ENCODE measurements at regions of chr1 and their contacts with region 1.

Region 1: DNA sequence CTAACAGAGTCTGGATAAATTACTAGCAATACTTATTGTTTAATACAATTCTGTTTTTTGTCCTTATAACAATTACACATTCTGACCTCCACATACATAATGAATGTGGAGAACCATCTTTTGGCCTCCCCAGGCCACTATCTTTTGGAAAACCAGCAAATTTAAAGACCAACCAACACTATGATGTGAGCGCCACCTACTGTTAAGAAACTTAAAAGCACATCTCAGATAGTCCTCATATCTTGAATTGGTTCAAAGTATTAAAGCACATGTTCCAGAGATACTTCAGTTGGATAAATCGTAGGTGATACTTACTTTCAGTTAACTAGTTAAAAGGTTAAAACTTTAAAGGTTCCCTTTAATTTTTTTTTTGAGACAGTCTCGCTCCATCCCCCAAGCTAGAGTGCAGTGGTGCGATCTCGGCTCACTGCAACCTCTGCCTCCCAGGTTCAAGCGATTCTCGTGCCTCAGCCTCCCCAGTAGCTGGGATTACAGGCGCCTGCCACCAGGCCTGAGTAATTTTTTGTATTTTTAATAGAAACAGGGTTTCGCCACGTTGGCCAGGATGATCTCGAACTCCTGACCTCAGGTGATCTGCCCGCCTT is 29.3 kb upstream of the USP1 start:
- DNase-seq: peak in 1 of 2 experiments; percentile 50
- H3K4me3 ChIP-seq: no peak overlapping the region
- H3K4me3 Mint-ChIP-seq: no peak overlapping the region
- H3K27ac Mint-ChIP-seq: no peak overlapping the region
- H3K4me1 ChIP-seq: no peaks in the 10 kb centered on the region
- H3K4me1 Mint-ChIP-seq: no peaks in the 10 kb centered on the region
- H3K27me3 ChIP-seq: no peaks in the 10 kb centered on the region
- H3K27me3 Mint-ChIP-seq: no peaks in the 10 kb centered on the region
- CTCF ChIP-seq: peak; percentile 38 to 51

Region 2: DNA sequence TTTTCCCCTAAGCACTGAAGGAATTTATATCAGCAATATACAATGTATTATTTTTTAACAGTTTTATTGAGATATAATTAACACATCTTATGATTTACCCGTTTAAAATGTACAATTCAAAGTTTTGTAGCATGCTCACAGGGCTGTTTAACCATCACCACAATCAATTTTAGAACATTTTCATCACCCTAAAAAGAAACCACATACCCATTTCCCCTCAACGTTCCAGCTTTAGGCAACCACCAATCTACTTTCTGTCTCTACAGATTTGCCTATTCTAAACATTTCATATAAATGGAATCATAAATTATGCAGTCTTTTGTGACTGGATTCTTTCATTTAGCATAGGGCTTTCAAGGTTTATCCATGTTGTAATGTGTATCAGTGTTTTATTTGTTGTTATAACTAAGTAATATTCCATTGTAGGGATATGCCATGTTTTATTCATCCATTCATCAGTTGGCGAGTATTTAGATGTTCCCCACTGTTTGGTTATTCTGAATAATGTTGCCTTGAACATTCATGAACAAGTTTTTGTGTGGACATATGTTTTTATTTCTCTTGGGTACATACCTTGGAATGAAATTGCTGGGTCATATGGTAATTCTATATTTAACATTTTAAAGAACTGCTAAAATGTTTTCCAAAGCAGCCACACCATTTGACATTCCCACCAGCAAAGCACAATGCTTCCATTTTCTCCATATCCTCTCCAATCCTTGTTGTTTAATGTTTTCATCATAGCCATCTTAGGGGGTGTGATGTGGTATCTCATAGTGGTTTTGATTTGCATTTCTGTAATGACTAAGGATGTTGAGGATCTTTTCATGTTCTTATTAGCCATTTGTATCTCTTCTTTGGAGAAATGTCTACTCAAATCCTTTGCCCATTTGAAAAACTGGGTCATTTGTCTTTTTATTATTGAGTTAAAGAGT is 871.1 kb before region 1 on chr1:
- CTCF ChIA-PET with region 1: no interaction called
- POLR2A ChIA-PET with region 1: no interaction called
- intact Hi-C with region 1: no loop called
- DNase-seq: no peak
- H3K4me3 ChIP-seq: no peak overlapping the region
- H3K4me3 Mint-ChIP-seq: no peak overlapping the region
- H3K27ac Mint-ChIP-seq: no peak overlapping the region
- H3K4me1 ChIP-seq: no peaks in the 10 kb centered on the region
- H3K4me1 Mint-ChIP-seq: no peaks in the 10 kb centered on the region
- H3K27me3 ChIP-seq: no peaks in the 10 kb centered on the region
- H3K27me3 Mint-ChIP-seq: no peaks in the 10 kb centered on the region
- CTCF ChIP-seq: no peak

Region 3: GRCh38 chr1:62082456-62083363 is 324.8 kb before region 1 on chr1:
- CTCF ChIA-PET with region 1: no interaction called
- POLR2A ChIA-PET with region 1: no interaction called
- intact Hi-C with region 1: loop called (anchors 2 kb)
- DNase-seq: peak; percentile 35 to 49
- H3K4me3 ChIP-seq: no peak overlapping the region
- H3K4me3 Mint-ChIP-seq: no peak overlapping the region
- H3K27ac Mint-ChIP-seq: no peak overlapping the region
- H3K4me1 ChIP-seq: peaks cover 9% of the 10 kb centered on the region; the same call in 1 of the 2 replicates
- H3K4me1 Mint-ChIP-seq: no peaks in the 10 kb centered on the region
- H3K27me3 ChIP-seq: no peaks in the 10 kb centered on the region
- H3K27me3 Mint-ChIP-seq: no peaks in the 10 kb centered on the region
- CTCF ChIP-seq: peak; percentile 77 to 78

Region 4: DNA sequence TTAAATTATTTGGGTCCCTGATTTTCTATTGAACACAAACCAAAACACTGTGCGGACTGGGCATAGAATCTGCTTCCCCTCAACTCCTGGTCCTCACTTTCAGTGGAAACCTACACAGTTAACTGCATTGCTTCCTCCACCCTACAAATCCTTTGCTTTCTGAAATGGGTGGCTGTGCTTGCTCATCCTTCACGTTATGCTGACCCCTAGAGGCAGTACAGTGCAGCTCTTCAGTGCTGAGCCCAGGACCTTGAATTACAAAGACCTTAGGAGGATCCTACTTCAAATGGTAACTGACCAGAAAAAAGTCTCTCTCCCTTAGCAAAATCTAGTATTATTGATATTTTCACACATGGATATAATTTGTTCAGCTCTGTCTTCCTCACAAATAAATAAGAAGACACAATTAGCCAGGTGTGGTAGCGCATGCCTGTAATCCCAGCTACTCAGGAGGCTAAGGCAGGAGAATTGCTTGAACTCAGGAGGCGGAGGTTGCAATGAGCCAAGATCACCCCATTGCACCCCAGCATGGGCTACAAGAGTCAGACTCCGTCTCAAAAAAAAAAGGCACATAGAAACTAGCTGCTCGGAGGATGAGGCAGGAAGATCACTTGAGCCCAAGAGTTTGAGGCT is 276.3 kb before region 1 on chr1:
- CTCF ChIA-PET with region 1: no interaction called
- POLR2A ChIA-PET with region 1: no interaction called
- intact Hi-C with region 1: loop called (anchors 1 kb)
- DNase-seq: peak; percentile 51 to 56
- H3K4me3 ChIP-seq: no peak overlapping the region
- H3K4me3 Mint-ChIP-seq: no peak overlapping the region
- H3K27ac Mint-ChIP-seq: no peak overlapping the region
- H3K4me1 ChIP-seq: no peaks in the 10 kb centered on the region
- H3K4me1 Mint-ChIP-seq: no peaks in the 10 kb centered on the region
- H3K27me3 ChIP-seq: no peaks in the 10 kb centered on the region
- H3K27me3 Mint-ChIP-seq: no peaks in the 10 kb centered on the region
- CTCF ChIP-seq: peak; percentile 60 to 78

Region 5: DNA sequence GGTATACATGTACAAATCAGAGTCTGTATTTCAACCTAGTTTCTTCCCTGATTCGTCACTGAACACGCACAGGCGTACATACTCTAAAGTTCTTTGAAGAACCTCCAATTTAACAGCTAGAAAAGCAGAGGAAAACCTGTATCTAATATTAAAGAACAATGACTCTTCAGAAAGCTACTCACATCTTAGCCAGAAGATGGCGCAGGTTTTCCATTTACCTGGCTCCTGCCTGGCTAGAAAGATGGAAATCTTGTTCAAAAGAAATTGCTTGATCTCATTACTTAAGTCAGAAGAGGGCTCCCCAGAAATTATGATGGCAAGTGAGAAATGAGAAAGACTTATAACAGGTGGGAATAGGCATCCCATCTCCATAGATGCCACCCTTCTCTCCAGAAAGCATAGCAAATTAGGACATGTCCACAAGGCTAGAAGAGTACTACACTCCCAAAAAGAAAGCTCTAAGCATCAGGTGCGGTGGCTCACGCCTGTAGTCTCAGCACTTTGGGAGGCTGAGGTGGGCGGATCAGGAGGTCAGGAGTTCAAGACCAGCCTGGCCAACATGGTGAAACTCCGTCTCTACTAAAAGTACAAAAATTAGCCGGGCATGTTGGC is 231.8 kb before region 1 on chr1:
- CTCF ChIA-PET with region 1: interaction called, 10 read pairs
- POLR2A ChIA-PET with region 1: no interaction called
- intact Hi-C with region 1: loop called (anchors 1 kb)
- DNase-seq: peak in 1 of 2 experiments; percentile 53
- H3K4me3 ChIP-seq: no peak overlapping the region
- H3K4me3 Mint-ChIP-seq: no peak overlapping the region
- H3K27ac Mint-ChIP-seq: no peak overlapping the region
- H3K4me1 ChIP-seq: no peaks in the 10 kb centered on the region
- H3K4me1 Mint-ChIP-seq: peaks cover 13% of the 10 kb centered on the region
- H3K27me3 ChIP-seq: no peaks in the 10 kb centered on the region
- H3K27me3 Mint-ChIP-seq: no peaks in the 10 kb centered on the region
- CTCF ChIP-seq: peak; percentile 65

Region 6: GRCh38 chr1:62237361-62237760 is 170.1 kb before region 1 on chr1:
- CTCF ChIA-PET with region 1: no interaction called
- POLR2A ChIA-PET with region 1: no interaction called
- intact Hi-C with region 1: loop called (anchors 5 kb)
- DNase-seq: no peak
- H3K4me3 ChIP-seq: no peak overlapping the region
- H3K4me3 Mint-ChIP-seq: no peak overlapping the region
- H3K27ac Mint-ChIP-seq: peak overlapping the region; percentile 88
- H3K4me1 ChIP-seq: peaks cover 32% of the 10 kb centered on the region
- H3K4me1 Mint-ChIP-seq: peaks cover 43% of the 10 kb centered on the region
- H3K27me3 ChIP-seq: no peaks in the 10 kb centered on the region
- H3K27me3 Mint-ChIP-seq: no peaks in the 10 kb centered on the region
- CTCF ChIP-seq: no peak

Region 7: DNA sequence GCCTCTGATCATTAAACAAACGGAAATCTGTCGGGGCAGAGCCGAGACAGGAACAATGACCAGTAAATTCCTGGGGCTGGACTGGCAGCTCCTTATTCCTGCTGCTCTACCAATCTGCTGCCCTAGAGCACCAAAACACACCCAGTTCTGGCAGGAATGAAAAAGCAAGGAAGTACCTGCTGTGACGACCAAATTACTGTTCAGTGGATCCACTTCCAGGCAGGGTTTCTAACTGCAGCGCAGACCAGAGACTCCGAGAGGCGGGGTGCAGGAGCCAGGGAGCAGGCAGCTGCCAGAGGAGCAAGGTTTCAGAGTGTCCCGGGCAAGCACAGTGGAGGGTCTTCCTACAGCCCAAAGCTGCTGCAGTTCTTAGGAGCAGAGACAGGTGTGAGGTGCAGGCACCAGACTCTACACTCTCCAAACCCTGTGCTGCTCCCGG is 120.7 kb before region 1 on chr1:
- CTCF ChIA-PET with region 1: interaction called, 3 read pairs
- POLR2A ChIA-PET with region 1: no interaction called
- intact Hi-C with region 1: loop called (anchors 2 kb)
- DNase-seq: peak; percentile 73 to 84
- H3K4me3 ChIP-seq: peak overlapping the region; percentile 9
- H3K4me3 Mint-ChIP-seq: peak overlapping the region; percentile 68
- H3K27ac Mint-ChIP-seq: peak overlapping the region; percentile 80
- H3K4me1 ChIP-seq: peaks cover 50% of the 10 kb centered on the region
- H3K4me1 Mint-ChIP-seq: peaks cover 55% of the 10 kb centered on the region
- H3K27me3 ChIP-seq: no peaks in the 10 kb centered on the region
- H3K27me3 Mint-ChIP-seq: no peaks in the 10 kb centered on the region
- CTCF ChIP-seq: no peak

Region 8: GRCh38 chr1:62294261-62294660 is 113.2 kb before region 1 on chr1:
- CTCF ChIA-PET with region 1: no interaction called
- POLR2A ChIA-PET with region 1: no interaction called
- intact Hi-C with region 1: loop called (anchors 1 kb)
- DNase-seq: peak; percentile 51 to 63
- H3K4me3 ChIP-seq: no peak overlapping the region
- H3K4me3 Mint-ChIP-seq: no peak overlapping the region
- H3K27ac Mint-ChIP-seq: no peak overlapping the region
- H3K4me1 ChIP-seq: peaks cover 10% of the 10 kb centered on the region
- H3K4me1 Mint-ChIP-seq: peaks cover 12% of the 10 kb centered on the region
- H3K27me3 ChIP-seq: no peaks in the 10 kb centered on the region
- H3K27me3 Mint-ChIP-seq: no peaks in the 10 kb centered on the region
- CTCF ChIP-seq: peak; percentile 34 to 40

Measured in Caco-2 (cell line).